ENCODE measurements at regions of chr3 and their contacts with region 1.

Region 1: DNA sequence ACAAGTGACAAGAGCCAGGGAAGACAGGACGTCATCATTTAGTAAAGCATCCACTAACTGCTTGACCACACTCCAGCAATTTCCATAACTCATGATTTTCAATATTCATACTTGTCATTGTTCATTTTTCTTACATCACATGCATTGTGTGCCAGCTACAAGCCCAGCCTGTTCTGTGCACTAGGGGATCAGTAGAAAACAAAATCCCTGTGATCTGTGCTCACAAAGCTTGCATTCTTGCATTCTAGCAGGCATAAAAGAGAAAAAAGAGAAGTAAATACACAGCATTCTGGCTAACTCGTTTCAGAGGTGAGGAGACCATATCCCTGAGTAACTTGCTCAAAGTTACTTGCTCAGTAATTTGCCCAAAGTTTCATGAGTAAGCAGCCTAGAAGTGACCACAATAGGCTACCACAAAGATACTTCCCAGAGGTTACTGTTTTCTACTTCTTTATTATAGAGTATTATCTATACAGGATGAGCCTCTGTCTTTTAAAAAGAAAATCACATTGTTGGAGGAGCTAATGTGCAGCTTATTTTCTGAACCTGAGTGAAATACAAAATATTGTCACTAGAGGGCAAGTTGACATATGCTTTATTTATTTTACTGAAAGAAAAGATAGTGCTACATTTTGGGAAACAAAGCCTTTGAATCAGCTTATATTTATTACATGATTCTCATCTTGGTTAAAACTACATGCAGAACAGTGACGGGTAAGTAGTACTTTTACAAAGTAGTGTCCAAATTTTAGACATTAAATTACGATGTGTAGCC is 701.4 kb upstream of the LMCD1 start:
- DNase-seq: no peak
- H3K4me3 Mint-ChIP-seq: no peak overlapping the region
- H3K27ac Mint-ChIP-seq: no peak overlapping the region
- H3K4me1 Mint-ChIP-seq: no peaks in the 10 kb centered on the region
- H3K27me3 Mint-ChIP-seq: no peaks in the 10 kb centered on the region

Region 2: DNA sequence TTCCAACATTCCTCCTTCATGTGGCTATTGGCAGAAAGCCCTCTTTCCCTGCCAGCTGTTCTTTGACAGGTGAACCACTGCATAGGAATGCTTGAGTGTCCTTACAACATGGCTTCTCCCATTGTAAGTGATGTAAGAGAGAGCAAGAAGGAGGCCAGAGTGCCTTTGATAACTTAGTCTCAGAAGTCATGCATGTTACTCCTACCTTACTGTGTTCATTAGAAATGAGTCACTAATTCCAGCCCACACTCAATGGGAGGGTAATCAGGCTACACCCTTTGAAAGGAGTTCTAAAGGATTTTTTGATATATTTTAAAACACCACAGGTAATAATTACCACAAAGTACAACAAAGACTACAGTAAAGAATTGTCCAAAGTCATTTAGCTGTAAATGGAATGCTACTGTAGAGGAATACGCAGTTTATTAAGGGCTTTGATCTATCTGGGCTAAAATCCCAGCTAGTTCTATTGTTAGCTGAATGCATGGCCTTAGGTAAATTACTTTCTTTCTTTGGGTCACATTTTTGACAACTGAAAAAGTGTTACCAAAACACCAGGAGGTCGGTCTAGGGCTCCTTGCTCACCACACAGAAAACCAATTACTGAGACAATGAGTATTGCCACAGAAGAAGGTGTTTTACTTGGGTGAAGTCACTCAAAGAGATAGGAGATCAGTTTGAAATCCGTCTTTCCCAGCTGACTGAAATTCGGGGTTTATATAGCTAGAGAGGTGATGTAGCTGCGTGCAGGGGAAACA is 784.3 kb before region 1 on chr3:
- intact Hi-C with region 1: no loop called
- DNase-seq: no peak
- H3K4me3 Mint-ChIP-seq: no peak overlapping the region
- H3K27ac Mint-ChIP-seq: no peak overlapping the region
- H3K4me1 Mint-ChIP-seq: no peaks in the 10 kb centered on the region
- H3K27me3 Mint-ChIP-seq: no peaks in the 10 kb centered on the region

Region 3: DNA sequence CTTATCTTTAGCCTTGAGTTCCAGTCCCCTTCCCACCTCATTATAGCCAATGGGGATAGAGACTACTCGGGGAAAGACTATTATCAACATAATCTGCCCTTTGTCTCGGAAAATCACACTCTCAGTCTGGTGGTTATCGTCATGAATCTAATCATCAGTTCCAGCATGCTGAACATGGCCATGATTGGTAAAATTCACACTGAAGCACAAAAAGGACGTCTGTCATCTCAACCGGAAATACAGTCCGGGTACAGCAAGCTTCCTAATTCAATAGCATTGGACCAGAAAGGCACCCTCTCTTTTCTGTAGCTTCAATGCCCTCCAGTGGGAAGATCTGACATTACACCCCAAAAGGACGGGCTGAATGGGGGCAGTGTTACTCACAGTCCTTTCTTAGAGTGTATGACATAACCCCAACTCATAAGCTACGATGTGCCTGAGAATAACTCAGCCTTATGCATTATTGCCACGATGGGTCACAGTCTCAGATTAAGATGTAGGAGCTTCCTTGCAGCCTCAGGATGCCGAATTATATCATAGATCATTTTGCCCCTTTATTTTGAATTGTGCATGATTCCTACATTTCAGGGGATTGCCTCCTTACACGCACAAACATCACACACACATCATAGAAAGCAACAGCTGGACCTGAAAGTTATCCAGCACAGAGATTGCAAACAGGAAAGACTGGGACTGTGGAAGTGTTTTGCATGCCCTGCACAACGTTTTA is 311.0 kb after region 1 on chr3:
- intact Hi-C with region 1: loop called (anchors 5 kb)
- DNase-seq: peak; percentile 33
- H3K4me3 Mint-ChIP-seq: no peak overlapping the region
- H3K27ac Mint-ChIP-seq: no peak overlapping the region
- H3K4me1 Mint-ChIP-seq: no peaks in the 10 kb centered on the region
- H3K27me3 Mint-ChIP-seq: peaks cover 2% of the 10 kb centered on the region

Measured in activated T-helper 1 cell treated with anti-CD3 and anti-CD28 coated beads, Interleukin-12 subunit alpha, Interleukin-12 subunit beta, Interleukin-2, Interleukin-4 antibody, amounts not matched to agents 30 ng/mL and 10 ng/mL and 1 ng/mL, durations not matched to agents 14 hours and 24 hours and 36 hours (primary cell).